CD4-positive, alpha-beta T cell (primary cell): ENCODE measurements at regions of chr10 and their contacts with region 1.

Region 1: GRCh38 chr10:50624866-50625692 is 1.3 kb upstream of the SGMS1 start:
- DNase-seq: peak; percentile 35 to 88 (median 54)
- ATAC-seq: peak; percentile 24
- H3K4me3 ChIP-seq: peak overlapping the region; percentile 71
- H3K4me3 Mint-ChIP-seq: peak overlapping the region; percentile 99
- H3K27ac ChIP-seq: peak overlapping the region; percentile 98
- H3K27ac Mint-ChIP-seq: peak overlapping the region; percentile 97
- H3K4me1 ChIP-seq: peaks cover 29% of the 10 kb centered on the region
- H3K4me1 Mint-ChIP-seq: peaks cover 35% of the 10 kb centered on the region
- H3K27me3 ChIP-seq: no peaks in the 10 kb centered on the region
- H3K27me3 Mint-ChIP-seq: no peaks in the 10 kb centered on the region
- CTCF ChIP-seq: peak; percentile 52

Region 2: GRCh38 chr10:49242604-49243003 is 1382.5 kb before region 1 on chr10:
- CTCF ChIA-PET with region 1: no interaction called
- POLR2A ChIA-PET with region 1: no interaction called
- intact Hi-C with region 1: no loop called
- DNase-seq: no peak
- ATAC-seq: no peak
- H3K4me3 ChIP-seq: no peak overlapping the region
- H3K4me3 Mint-ChIP-seq: no peak overlapping the region
- H3K27ac ChIP-seq: no peak overlapping the region
- H3K27ac Mint-ChIP-seq: no peak overlapping the region
- H3K4me1 ChIP-seq: no peaks in the 10 kb centered on the region
- H3K4me1 Mint-ChIP-seq: no peaks in the 10 kb centered on the region
- H3K27me3 ChIP-seq: peaks cover 0 to 3% of the 10 kb centered on the region in 2 experiments
- H3K27me3 Mint-ChIP-seq: peaks cover 10% of the 10 kb centered on the region
- CTCF ChIP-seq: no peak

Region 3: GRCh38 chr10:50063100-50063499 is 562.0 kb before region 1 on chr10:
- CTCF ChIA-PET with region 1: no interaction called
- POLR2A ChIA-PET with region 1: interaction called, 6 read pairs
- intact Hi-C with region 1: loop called in 1 of 2 experiments (anchors 10 kb)
- DNase-seq: no peak
- ATAC-seq: no peak
- H3K4me3 ChIP-seq: no peak overlapping the region
- H3K4me3 Mint-ChIP-seq: peak overlapping the region; percentile 54
- H3K27ac ChIP-seq: no peak overlapping the region
- H3K27ac Mint-ChIP-seq: no peak overlapping the region
- H3K4me1 ChIP-seq: peaks cover 3% of the 10 kb centered on the region
- H3K4me1 Mint-ChIP-seq: peaks cover 5% of the 10 kb centered on the region
- H3K27me3 ChIP-seq: no peaks in the 10 kb centered on the region
- H3K27me3 Mint-ChIP-seq: no peaks in the 10 kb centered on the region
- CTCF ChIP-seq: no peak

Region 4: GRCh38 chr10:50561816-50562215 is 63.3 kb before region 1 on chr10:
- CTCF ChIA-PET with region 1: no interaction called
- POLR2A ChIA-PET with region 1: interaction called, 4 read pairs
- intact Hi-C with region 1: loop called (anchors 2 to 5 kb)
- DNase-seq: peak in 4 of 14 experiments; percentile 23 to 47 (median 36)
- ATAC-seq: peak; percentile 43
- H3K4me3 ChIP-seq: no peak overlapping the region
- H3K4me3 Mint-ChIP-seq: no peak overlapping the region
- H3K27ac ChIP-seq: no peak overlapping the region
- H3K27ac Mint-ChIP-seq: no peak overlapping the region
- H3K4me1 ChIP-seq: no peaks in the 10 kb centered on the region
- H3K4me1 Mint-ChIP-seq: peaks cover 39% of the 10 kb centered on the region
- H3K27me3 ChIP-seq: no peaks in the 10 kb centered on the region
- H3K27me3 Mint-ChIP-seq: no peaks in the 10 kb centered on the region
- CTCF ChIP-seq: peak; percentile 63

Region 5: DNA sequence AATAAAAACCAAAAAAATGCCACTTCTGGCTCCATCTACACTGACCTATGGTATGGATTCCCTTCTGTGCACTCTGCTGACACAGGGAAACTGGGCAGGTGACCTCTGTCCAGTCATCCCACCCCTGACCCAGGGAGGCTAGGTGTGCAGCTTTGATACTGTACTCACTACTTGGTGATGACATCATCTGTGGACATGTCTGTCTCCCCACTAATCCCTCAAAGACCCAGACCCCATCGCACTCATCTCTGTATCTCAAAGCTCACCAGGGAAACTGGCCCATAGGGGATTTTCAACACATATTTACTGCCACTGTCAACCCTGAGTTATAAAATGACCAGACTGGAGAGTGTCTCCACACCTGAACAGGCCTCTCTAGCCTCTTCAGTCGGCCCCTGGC is 11.9 kb before region 1 on chr10:
- CTCF ChIA-PET with region 1: interaction called, 3 read pairs
- POLR2A ChIA-PET with region 1: interaction called, 10 read pairs
- intact Hi-C with region 1: no loop called
- DNase-seq: no peak
- ATAC-seq: no peak
- H3K4me3 ChIP-seq: no peak overlapping the region
- H3K4me3 Mint-ChIP-seq: no peak overlapping the region
- H3K27ac ChIP-seq: no peak overlapping the region
- H3K27ac Mint-ChIP-seq: no peak overlapping the region
- H3K4me1 ChIP-seq: peaks cover 24% of the 10 kb centered on the region
- H3K4me1 Mint-ChIP-seq: peaks cover 79% of the 10 kb centered on the region
- H3K27me3 ChIP-seq: no peaks in the 10 kb centered on the region
- H3K27me3 Mint-ChIP-seq: no peaks in the 10 kb centered on the region
- CTCF ChIP-seq: no peak

Region 6: DNA sequence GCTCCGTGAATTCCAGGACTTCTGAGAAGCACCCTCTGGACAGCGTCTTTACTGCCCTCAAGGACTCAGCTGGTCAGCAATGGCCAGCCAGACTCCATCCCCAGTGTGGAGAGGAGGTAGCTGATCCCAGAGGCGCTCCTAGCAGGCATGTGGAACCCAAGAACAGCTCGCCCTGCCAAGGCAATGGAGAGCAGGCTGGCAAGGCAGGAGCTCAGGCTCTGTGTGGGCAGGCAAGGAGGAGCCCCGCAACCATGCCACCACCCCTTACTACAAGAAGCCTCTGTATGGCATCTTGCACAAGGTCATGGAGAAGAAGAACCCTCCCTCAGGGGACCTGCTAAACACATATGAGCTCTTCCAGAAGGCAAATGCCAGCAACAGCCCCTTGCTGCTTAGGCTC is 33.1 kb after region 1 on chr10:
- CTCF ChIA-PET with region 1: no interaction called
- POLR2A ChIA-PET with region 1: interaction called, 32 read pairs
- intact Hi-C with region 1: loop called in 1 of 2 experiments (anchors 1 kb)
- DNase-seq: no peak
- ATAC-seq: no peak
- H3K4me3 ChIP-seq: no peak overlapping the region
- H3K4me3 Mint-ChIP-seq: no peak overlapping the region
- H3K27ac ChIP-seq: no peak overlapping the region
- H3K27ac Mint-ChIP-seq: no peak overlapping the region
- H3K4me1 ChIP-seq: peaks cover 32% of the 10 kb centered on the region
- H3K4me1 Mint-ChIP-seq: peaks cover 23% of the 10 kb centered on the region
- H3K27me3 ChIP-seq: no peaks in the 10 kb centered on the region
- H3K27me3 Mint-ChIP-seq: no peaks in the 10 kb centered on the region
- CTCF ChIP-seq: no peak

Region 7: GRCh38 chr10:51667678-51668335 is 1042.7 kb after region 1 on chr10:
- CTCF ChIA-PET with region 1: no interaction called
- POLR2A ChIA-PET with region 1: no interaction called
- intact Hi-C with region 1: no loop called
- DNase-seq: no peak
- ATAC-seq: no peak
- H3K4me3 ChIP-seq: no peak overlapping the region
- H3K4me3 Mint-ChIP-seq: no peak overlapping the region
- H3K27ac ChIP-seq: no peak overlapping the region
- H3K27ac Mint-ChIP-seq: no peak overlapping the region
- H3K4me1 ChIP-seq: no peaks in the 10 kb centered on the region
- H3K4me1 Mint-ChIP-seq: no peaks in the 10 kb centered on the region
- H3K27me3 ChIP-seq: no peaks in the 10 kb centered on the region
- H3K27me3 Mint-ChIP-seq: peaks cover 25% of the 10 kb centered on the region
- CTCF ChIP-seq: no peak